Activated CD4-positive, alpha-beta memory T cell treated with anti-CD3 and anti-CD28 coated beads for 36 hours (primary cell): ENCODE measurements at regions of chr17 and their contacts with region 1.

Region 1: DNA sequence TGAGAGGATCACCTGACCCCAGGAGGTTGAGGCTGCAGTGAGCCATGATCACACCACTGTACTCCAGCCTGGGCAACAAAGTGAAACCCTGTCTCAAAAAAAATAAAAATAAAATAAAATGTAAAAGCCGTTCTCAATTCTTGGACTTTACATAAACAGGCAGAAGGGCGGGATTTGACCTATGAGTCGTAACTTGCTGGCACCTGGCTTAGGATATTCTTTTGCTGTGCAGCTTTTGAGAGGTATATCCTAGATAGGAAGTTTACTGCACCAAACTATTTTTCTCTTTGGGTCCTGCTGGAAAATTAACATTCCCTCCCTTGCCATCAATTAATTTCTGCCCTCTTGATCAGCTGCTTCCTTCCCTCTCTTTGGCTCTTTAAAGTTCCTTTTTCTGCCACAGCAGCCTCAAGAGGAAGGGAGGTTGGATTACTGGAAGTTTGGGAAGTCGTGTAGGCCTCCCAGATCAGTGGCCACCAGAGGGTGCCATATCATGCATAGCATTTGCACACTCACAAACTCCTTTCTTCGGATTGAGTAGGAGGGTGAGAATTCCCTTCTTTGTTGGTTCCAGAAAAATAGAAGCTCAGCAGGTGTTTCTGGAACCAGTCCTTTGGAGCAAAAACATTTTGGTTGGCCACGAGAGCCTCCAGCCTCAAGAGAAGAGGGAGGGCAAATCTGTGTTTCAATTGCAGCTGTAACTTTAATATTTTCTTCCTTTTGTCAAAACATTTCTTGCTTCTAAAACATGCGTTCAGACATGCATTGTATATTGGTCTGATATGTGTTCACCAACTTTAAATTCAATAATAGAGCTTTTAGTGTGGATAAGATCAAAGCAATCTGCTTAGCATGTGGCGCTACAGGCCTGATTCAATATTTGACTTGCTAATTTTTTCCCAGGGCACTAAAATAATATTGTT is 147.3 kb downstream of the CCDC182 start:
- DNase-seq: peak; percentile 51
- H3K4me3 Mint-ChIP-seq: no peak overlapping the region
- H3K27ac Mint-ChIP-seq: peak overlapping the region; percentile 90
- H3K4me1 Mint-ChIP-seq: peaks cover 52% of the 10 kb centered on the region
- H3K27me3 Mint-ChIP-seq: no peaks in the 10 kb centered on the region

Region 2: GRCh38 chr17:57451191-57451590 is 146.6 kb before region 1 on chr17:
- CTCF ChIA-PET with region 1: no interaction called
- POLR2A ChIA-PET with region 1: no interaction called
- intact Hi-C with region 1: no loop called
- DNase-seq: peak; percentile 59
- H3K4me3 Mint-ChIP-seq: peak overlapping the region; percentile 20
- H3K27ac Mint-ChIP-seq: peak overlapping the region; percentile 88
- H3K4me1 Mint-ChIP-seq: peaks cover 73% of the 10 kb centered on the region
- H3K27me3 Mint-ChIP-seq: no peaks in the 10 kb centered on the region

Region 3: DNA sequence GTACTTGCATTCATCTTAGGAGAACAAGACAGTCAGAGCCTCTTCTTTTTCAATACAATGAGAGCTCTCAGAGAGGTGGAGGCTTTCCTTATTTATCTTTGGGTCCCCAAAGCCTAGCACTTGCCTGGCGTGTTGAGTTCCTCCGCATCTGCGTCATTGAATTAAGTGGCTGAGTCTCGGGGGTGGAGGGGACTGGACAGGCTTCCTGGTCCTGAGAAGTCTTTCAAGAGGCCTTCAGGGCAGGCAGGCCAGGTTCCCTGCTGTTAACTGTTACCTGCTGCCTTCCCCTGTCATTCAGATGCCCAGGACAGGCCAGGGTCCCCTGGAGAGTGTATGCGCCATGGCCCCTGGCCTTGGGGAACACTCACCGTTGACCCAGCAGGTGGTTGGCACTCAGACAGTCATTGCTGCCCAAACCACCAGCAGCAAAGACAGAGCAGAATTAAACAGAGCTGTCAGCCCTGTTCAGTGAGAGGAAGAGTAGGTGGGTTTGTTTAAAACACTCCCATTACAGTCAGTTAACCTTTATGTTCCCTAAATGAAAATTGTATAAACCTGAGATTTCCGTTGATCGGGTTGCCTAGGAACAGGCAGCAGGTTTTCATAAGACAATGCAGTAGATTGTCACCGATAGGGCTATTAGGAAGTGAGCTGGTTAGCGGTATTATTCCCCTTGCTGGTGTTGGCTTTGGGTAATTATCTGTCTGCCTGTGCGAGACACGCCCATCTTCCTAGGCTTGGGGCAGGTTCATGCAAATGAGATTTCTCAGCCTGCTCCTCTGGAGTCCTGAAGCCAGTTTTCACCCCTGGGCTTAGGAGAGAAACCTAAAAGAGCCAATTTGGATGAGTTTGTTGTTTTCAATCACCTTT is 14.6 kb after region 1 on chr17:
- CTCF ChIA-PET with region 1: interaction called, 13 read pairs
- POLR2A ChIA-PET with region 1: no interaction called
- intact Hi-C with region 1: no loop called
- DNase-seq: no peak
- H3K4me3 Mint-ChIP-seq: no peak overlapping the region
- H3K27ac Mint-ChIP-seq: no peak overlapping the region
- H3K4me1 Mint-ChIP-seq: peaks cover 20% of the 10 kb centered on the region
- H3K27me3 Mint-ChIP-seq: no peaks in the 10 kb centered on the region

Region 4: DNA sequence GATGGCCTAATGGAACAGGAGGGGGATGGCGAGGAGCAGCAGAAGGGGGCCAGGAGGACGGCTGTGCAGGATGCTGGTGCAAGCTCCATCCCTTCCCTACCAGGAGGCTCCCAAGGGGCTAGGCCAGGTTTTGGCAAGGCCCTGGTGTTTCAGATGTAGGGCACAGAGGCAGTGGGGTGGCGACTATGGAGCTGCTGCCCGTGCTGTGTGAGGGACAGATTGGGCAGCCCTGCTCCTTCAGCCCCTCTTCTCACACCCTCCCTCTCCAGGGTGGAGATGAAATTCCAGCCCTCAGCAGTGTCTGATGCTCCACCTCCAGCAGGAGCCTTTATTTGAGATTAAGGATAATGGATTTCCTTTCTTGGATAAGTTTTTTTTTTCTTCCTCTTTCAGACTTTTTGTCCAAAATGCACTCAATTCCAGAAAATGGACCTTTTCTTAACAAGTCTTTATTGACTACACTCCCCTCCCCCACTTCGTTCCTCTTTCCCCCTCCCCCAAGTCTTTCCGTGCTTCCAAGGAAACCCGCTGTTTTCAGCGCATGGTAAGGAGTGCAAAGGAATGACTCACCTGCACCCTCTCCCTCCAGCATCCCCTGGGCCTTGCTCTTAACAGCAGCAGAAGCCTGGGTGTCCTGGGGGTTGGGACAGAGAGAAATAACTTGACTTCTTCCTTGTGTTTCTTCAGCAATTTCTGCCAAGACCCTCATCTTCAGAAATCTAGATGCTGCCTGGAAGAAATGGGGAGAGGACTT is 52.1 kb after region 1 on chr17:
- CTCF ChIA-PET with region 1: interaction called, 13 read pairs
- POLR2A ChIA-PET with region 1: interaction called, 3 read pairs
- intact Hi-C with region 1: loop called (anchors 1 kb)
- DNase-seq: no peak
- H3K4me3 Mint-ChIP-seq: no peak overlapping the region
- H3K27ac Mint-ChIP-seq: no peak overlapping the region
- H3K4me1 Mint-ChIP-seq: peaks cover 9% of the 10 kb centered on the region
- H3K27me3 Mint-ChIP-seq: no peaks in the 10 kb centered on the region

Region 5: GRCh38 chr17:57739402-57740392 is 141.9 kb after region 1 on chr17:
- CTCF ChIA-PET with region 1: interaction called, 19 read pairs
- POLR2A ChIA-PET with region 1: no interaction called
- intact Hi-C with region 1: loop called (anchors 5 kb)
- DNase-seq: peak; percentile 18
- H3K4me3 Mint-ChIP-seq: no peak overlapping the region
- H3K27ac Mint-ChIP-seq: no peak overlapping the region
- H3K4me1 Mint-ChIP-seq: no peaks in the 10 kb centered on the region
- H3K27me3 Mint-ChIP-seq: peaks cover 2% of the 10 kb centered on the region

Region 6: GRCh38 chr17:57747221-57748017 is 149.6 kb after region 1 on chr17:
- CTCF ChIA-PET with region 1: interaction called, 11 read pairs
- POLR2A ChIA-PET with region 1: no interaction called
- intact Hi-C with region 1: loop called (anchors 2 kb)
- DNase-seq: peak; percentile 53
- H3K4me3 Mint-ChIP-seq: no peak overlapping the region
- H3K27ac Mint-ChIP-seq: no peak overlapping the region
- H3K4me1 Mint-ChIP-seq: no peaks in the 10 kb centered on the region
- H3K27me3 Mint-ChIP-seq: peaks cover 2% of the 10 kb centered on the region